Endothelial cell of umbilical vein (primary cell): ENCODE measurements at regions of chr1 and their contacts with region 1.

Region 1: GRCh38 chr1:74733604-74734484 is 892 bp downstream of the TYW3 start:
- DNase-seq: peak; percentile 88
- H3K4me3 ChIP-seq: peak overlapping the region; percentile 64 to 92 (median 72)
- H3K27ac ChIP-seq: peak overlapping the region; percentile 83
- H3K4me1 ChIP-seq: peaks cover 25% of the 10 kb centered on the region
- H3K27me3 ChIP-seq: no peaks in the 10 kb centered on the region
- CTCF ChIP-seq: peak; percentile 57 to 63
- POLR2A ChIP-seq: no peak

Region 2: GRCh38 chr1:73593364-73593763 is 1140.5 kb before region 1 on chr1:
- CTCF ChIA-PET with region 1: no interaction called
- POLR2A ChIA-PET with region 1: no interaction called
- dilution Hi-C with region 1: no loop called
- intact Hi-C with region 1: loop called (anchors 5 kb)
- DNase-seq: peak; percentile 83
- H3K4me3 ChIP-seq: peak overlapping the region in 1 of 3 experiments; percentile 21
- H3K27ac ChIP-seq: peak overlapping the region; percentile 74
- H3K4me1 ChIP-seq: peaks cover 17% of the 10 kb centered on the region
- H3K27me3 ChIP-seq: no peaks in the 10 kb centered on the region
- CTCF ChIP-seq: no peak
- POLR2A ChIP-seq: no peak

Region 3: DNA sequence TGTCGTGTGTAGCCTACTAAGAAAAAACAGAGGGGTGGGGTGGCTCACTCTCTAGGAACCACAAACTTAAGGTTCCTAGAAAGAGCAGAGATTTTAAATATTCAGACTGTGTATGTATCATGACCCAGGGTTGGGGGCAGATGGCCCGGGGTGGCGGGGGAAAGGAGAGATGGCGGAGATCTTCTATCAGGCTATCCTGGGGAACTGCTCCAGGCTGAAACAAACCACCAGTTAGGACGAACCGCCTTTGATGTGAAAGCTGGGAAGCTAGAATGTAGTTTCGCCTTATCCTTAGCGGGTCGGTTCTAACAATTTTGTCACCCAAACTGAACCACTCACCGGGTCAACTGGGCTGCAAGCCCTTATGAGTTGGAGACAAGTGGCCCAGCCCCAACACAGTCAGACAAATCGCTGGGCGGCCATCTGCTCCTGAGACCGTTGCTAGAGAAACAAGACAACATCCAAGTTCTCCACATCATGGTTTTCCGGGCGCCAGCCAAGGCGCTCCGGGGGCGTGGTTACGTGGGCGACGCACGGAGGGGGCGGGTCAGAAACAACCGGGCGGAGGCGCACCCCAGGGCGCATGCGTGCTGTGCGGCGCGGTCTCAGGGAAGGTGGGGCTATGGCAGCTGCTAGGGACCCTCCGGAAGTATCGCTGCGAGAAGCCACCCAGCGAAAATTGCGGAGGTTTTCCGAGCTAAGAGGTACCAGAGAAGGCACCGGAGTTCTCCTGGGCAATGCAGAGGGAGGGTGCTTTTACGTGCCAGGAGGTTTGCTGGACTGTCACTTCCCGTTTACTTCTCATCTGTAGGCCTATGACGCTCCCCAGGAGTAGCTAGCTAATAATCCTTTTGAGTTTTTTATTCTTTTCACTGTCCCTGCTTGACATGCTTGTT is 535.9 kb before region 1 on chr1 and contains the starts of genes FPGT and LRRIQ3:
- CTCF ChIA-PET with region 1: no interaction called
- POLR2A ChIA-PET with region 1: no interaction called
- dilution Hi-C with region 1: no loop called
- intact Hi-C with region 1: loop called (anchors 10 kb)
- DNase-seq: peak; percentile 98
- H3K4me3 ChIP-seq: peak within 1 kb of the TSS; percentile 67 to 91 (median 91)
- H3K27ac ChIP-seq: peak within 1 kb of the TSS; percentile 76
- H3K4me1 ChIP-seq: peaks cover 10% of the 10 kb centered on the region
- H3K27me3 ChIP-seq: no peaks in the 10 kb centered on the region
- CTCF ChIP-seq: no peak
- POLR2A ChIP-seq: peak; percentile 95
- total RNA-seq, gene FPGT: 10.9 and 11.1 TPM in 2 replicates
- total RNA-seq, gene LRRIQ3: 0.72 and 1.1 TPM in 2 replicates

Region 4: DNA sequence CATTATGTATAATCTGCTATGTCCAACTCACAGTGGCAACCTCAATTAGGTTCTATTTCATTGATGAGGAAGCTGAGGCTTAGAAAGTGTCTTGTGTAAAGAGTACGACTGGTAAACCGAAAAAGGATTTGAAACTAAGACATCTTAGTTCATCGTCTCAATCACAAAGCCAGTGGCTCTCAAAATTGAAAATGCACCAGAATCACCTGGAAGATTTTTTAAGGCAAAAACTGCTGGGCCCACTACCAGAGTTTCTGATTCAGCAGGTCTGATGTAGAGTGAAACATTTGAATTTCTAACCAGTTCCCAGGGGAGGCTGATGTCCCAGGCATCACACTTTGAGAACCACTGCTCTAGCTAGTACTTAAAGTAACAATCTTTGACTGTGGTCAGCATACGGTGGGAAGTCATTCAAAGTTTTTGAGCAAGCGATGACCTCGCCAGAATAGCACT is 216.2 kb before region 1 on chr1:
- CTCF ChIA-PET with region 1: no interaction called
- POLR2A ChIA-PET with region 1: no interaction called
- dilution Hi-C with region 1: no loop called
- intact Hi-C with region 1: no loop called
- DNase-seq: no peak
- H3K4me3 ChIP-seq: no peak overlapping the region
- H3K27ac ChIP-seq: no peak overlapping the region
- H3K4me1 ChIP-seq: no peaks in the 10 kb centered on the region
- H3K27me3 ChIP-seq: no peaks in the 10 kb centered on the region
- CTCF ChIP-seq: no peak
- POLR2A ChIP-seq: no peak

Region 5: GRCh38 chr1:74689621-74690363 is 44.1 kb before region 1 on chr1:
- CTCF ChIA-PET with region 1: interaction called, 19 read pairs
- POLR2A ChIA-PET with region 1: no interaction called
- dilution Hi-C with region 1: no loop called
- intact Hi-C with region 1: loop called (anchors 1 kb)
- DNase-seq: peak; percentile 63
- H3K4me3 ChIP-seq: no peak overlapping the region
- H3K27ac ChIP-seq: no peak overlapping the region
- H3K4me1 ChIP-seq: no peaks in the 10 kb centered on the region
- H3K27me3 ChIP-seq: no peaks in the 10 kb centered on the region
- CTCF ChIP-seq: peak; percentile 56 to 67
- POLR2A ChIP-seq: no peak

Region 6: DNA sequence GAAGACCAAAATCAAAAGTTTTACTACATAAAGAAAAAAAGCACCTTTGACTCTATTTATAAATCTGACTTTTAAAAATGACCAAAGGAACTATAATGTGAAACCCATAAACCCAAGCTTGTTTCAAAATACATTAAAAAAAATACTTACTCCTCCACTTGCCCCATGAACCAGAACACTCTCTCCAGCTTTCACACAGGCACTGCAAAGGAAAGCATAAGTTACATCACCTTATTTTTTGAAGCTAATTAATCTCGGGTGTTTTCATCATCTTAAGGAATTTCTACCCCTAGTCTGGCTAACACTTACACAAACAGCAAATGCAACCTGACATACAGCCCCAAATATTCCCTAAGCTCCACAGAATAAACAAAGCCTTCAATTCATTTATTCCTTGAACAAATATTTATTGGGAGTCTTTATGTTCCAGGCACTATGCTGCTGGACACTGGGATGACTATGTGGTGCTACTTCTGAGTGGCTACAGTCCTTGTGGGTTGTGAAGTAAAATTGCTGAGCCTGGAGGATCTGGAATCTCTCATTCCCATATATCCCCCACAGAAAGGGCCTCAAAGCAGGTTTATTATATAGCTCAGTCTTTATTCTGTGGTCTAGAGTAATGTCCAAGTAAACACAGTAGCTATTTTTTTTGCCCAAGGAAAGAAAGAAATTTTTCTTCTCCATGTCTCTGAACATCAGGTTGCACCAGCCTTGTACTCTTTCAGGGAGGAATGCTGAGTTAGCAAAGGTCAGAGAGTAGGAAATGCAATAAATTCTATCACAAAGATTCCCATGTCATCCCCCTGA is 19.2 kb before region 1 on chr1:
- CTCF ChIA-PET with region 1: interaction called, 10 read pairs
- POLR2A ChIA-PET with region 1: no interaction called
- dilution Hi-C with region 1: no loop called
- intact Hi-C with region 1: no loop called
- DNase-seq: no peak
- H3K4me3 ChIP-seq: no peak overlapping the region
- H3K27ac ChIP-seq: no peak overlapping the region
- H3K4me1 ChIP-seq: peaks cover 6% of the 10 kb centered on the region
- H3K27me3 ChIP-seq: no peaks in the 10 kb centered on the region
- CTCF ChIP-seq: no peak
- POLR2A ChIP-seq: no peak

Region 7: GRCh38 chr1:74811436-74812179 is 77.8 kb after region 1 on chr1:
- CTCF ChIA-PET with region 1: no interaction called
- POLR2A ChIA-PET with region 1: no interaction called
- dilution Hi-C with region 1: no loop called
- intact Hi-C with region 1: no loop called
- DNase-seq: no peak
- H3K4me3 ChIP-seq: no peak overlapping the region
- H3K27ac ChIP-seq: no peak overlapping the region
- H3K4me1 ChIP-seq: no peaks in the 10 kb centered on the region
- H3K27me3 ChIP-seq: no peaks in the 10 kb centered on the region
- CTCF ChIP-seq: no peak
- POLR2A ChIP-seq: no peak

Region 8: GRCh38 chr1:74964508-74965102 is 230.8 kb after region 1 on chr1:
- CTCF ChIA-PET with region 1: no interaction called
- POLR2A ChIA-PET with region 1: no interaction called
- dilution Hi-C with region 1: no loop called
- intact Hi-C with region 1: no loop called
- DNase-seq: peak; percentile 8
- H3K4me3 ChIP-seq: no peak overlapping the region
- H3K27ac ChIP-seq: no peak overlapping the region
- H3K4me1 ChIP-seq: no peaks in the 10 kb centered on the region
- H3K27me3 ChIP-seq: no peaks in the 10 kb centered on the region
- CTCF ChIP-seq: no peak
- POLR2A ChIP-seq: no peak

Region 9: GRCh38 chr1:75724472-75725022 is 990.7 kb after region 1 on chr1 and contains the start of gene ACADM:
- CTCF ChIA-PET with region 1: no interaction called
- POLR2A ChIA-PET with region 1: no interaction called
- dilution Hi-C with region 1: no loop called
- intact Hi-C with region 1: loop called (anchors 10 kb)
- DNase-seq: peak; percentile 85
- H3K4me3 ChIP-seq: peak within 1 kb of the TSS; percentile 73 to 99 (median 98)
- H3K27ac ChIP-seq: peak within 1 kb of the TSS; percentile 79
- H3K4me1 ChIP-seq: peaks cover 15% of the 10 kb centered on the region
- H3K27me3 ChIP-seq: no peaks in the 10 kb centered on the region
- CTCF ChIP-seq: no peak
- POLR2A ChIP-seq: peak; percentile 60
- total RNA-seq, gene ACADM: 32.5 and 40.4 TPM in 2 replicates

Region 10: GRCh38 chr1:75785983-75786853 is 1052.4 kb after region 1 on chr1 and contains the start of gene RABGGTB:
- CTCF ChIA-PET with region 1: no interaction called
- POLR2A ChIA-PET with region 1: no interaction called
- dilution Hi-C with region 1: no loop called
- intact Hi-C with region 1: loop called (anchors 2 kb)
- DNase-seq: peak; percentile 99
- H3K4me3 ChIP-seq: peak within 1 kb of the TSS; percentile 62 to 99 (median 96)
- H3K27ac ChIP-seq: peak within 1 kb of the TSS; percentile 83
- H3K4me1 ChIP-seq: peaks cover 33% of the 10 kb centered on the region
- H3K27me3 ChIP-seq: no peaks in the 10 kb centered on the region
- CTCF ChIP-seq: no peak
- POLR2A ChIP-seq: peak; percentile 100
- total RNA-seq, gene RABGGTB: 103 and 114 TPM in 2 replicates